Endothelial cell of umbilical vein (primary cell): ENCODE measurements at regions of chr3 and their contacts with region 1.

Region 1: DNA sequence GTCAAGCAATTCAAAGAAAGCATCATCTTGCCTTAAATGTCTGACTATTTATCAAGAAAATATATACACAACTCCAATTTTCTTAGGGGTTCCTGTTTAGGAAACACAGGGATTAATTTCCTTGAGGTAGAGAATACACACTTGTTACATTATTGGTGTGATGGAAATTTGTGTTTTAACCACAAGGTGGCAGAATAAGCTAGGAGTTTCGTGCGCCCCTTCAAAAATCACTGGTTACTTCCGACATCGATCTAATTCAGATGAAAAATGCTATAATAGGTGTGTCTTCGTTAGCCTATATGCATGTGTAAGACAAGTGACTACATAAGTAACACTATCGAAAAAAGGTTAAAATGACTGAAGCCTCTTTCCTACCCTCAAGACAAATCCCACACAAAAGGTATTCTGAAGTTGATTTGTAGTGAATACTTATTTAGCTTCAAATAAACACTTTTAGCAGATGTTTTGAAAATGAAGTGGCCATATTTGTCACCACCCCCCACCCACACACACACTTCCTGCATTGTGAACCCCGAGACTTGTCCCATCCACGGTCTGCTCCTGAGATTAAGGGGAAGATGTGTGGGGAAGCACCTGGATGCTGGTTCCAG is 246.5 kb downstream of the ROBO1 start:
- DNase-seq: peak; percentile 79
- H3K4me3 ChIP-seq: no peak overlapping the region
- H3K27ac ChIP-seq: no peak overlapping the region
- H3K4me1 ChIP-seq: peaks cover 6% of the 10 kb centered on the region
- H3K27me3 ChIP-seq: no peaks in the 10 kb centered on the region
- CTCF ChIP-seq: peak; percentile 17 to 30
- POLR2A ChIP-seq: no peak

Region 2: DNA sequence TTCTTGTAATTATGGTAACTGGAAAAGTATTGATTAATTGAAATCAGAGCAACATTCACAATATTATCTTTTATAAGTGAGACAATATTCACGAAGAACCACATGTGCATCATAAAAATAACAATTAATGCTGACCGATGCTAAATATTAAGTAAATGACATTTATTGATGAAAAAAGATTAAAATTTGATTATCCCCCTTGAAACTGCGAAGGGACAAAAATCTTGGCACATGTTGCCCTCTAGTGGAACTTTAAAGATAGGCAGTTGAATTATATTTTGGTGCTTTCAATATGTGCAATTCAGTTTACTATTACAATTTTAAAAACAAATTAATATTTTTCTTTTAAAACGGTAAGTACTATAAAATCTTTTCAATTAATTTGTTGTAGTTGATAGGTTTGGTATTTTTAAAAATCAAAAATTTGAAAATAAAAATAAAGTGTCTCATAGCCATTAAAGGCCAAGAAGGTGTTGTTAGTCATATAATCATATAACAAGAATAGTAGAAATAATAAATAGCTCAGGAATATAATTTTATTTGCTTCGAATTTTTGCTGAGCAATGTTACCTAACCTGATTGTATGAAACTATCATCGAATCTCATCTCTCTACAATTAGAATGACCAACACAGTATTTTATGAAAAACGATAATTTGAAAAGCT is 23.8 kb before region 1 on chr3:
- CTCF ChIA-PET with region 1: interaction called, 10 read pairs
- POLR2A ChIA-PET with region 1: no interaction called
- dilution Hi-C with region 1: no loop called
- intact Hi-C with region 1: no loop called
- DNase-seq: peak; percentile 33
- H3K4me3 ChIP-seq: no peak overlapping the region
- H3K27ac ChIP-seq: no peak overlapping the region
- H3K4me1 ChIP-seq: no peaks in the 10 kb centered on the region
- H3K27me3 ChIP-seq: no peaks in the 10 kb centered on the region
- CTCF ChIP-seq: peak; percentile 25 to 35
- POLR2A ChIP-seq: no peak

Region 3: DNA sequence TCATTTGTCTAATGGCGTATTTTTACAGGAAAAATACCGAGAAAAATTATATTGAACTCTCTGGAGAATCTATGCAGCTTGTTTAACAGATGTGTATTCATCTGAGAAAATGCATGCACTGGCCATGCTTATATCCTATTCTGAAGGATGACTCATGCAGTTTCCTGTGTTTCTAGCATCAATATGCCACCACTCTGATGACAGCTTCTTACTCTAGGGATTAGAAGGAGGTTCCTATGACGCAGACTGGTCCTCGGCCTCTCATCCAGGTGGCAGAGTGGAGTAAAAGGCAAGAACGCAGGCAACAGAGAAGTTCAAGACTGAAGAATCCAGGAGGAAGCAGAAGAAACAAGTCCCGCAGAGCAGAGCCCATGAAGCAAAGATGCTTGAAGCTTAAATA is 1156.5 kb after region 1 on chr3:
- CTCF ChIA-PET with region 1: interaction called, 90 read pairs
- POLR2A ChIA-PET with region 1: no interaction called
- dilution Hi-C with region 1: no loop called
- intact Hi-C with region 1: loop called (anchors 1 kb)
- DNase-seq: peak; percentile 62
- H3K4me3 ChIP-seq: no peak overlapping the region
- H3K27ac ChIP-seq: no peak overlapping the region
- H3K4me1 ChIP-seq: no peaks in the 10 kb centered on the region
- H3K27me3 ChIP-seq: no peaks in the 10 kb centered on the region
- CTCF ChIP-seq: no peak
- POLR2A ChIP-seq: no peak

Region 4: DNA sequence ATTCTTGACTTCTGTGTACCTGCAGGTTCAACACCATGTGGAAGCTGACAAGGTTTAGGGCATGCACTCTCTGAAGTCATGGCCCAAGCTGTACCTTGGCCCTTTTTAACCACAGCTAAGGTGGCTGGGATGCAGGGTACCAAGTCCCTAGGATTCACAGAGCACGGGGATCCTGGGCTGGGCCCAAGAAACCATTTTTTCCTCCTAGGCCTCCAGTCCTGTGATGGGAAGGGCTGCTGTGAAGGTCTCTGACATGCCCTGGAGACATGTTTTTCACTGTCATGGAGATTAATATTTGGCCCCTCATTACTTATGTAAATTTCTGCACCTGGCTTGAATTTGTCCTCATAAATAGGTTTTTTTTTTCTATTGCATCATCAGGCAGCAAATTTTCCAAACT is 1183.9 kb after region 1 on chr3:
- CTCF ChIA-PET with region 1: interaction called, 3 read pairs
- POLR2A ChIA-PET with region 1: no interaction called
- dilution Hi-C with region 1: loop called (anchors 25 kb)
- intact Hi-C with region 1: no loop called
- DNase-seq: no peak
- H3K4me3 ChIP-seq: no peak overlapping the region
- H3K27ac ChIP-seq: no peak overlapping the region
- H3K4me1 ChIP-seq: no peaks in the 10 kb centered on the region
- H3K27me3 ChIP-seq: no peaks in the 10 kb centered on the region
- CTCF ChIP-seq: no peak
- POLR2A ChIP-seq: no peak

Region 5: DNA sequence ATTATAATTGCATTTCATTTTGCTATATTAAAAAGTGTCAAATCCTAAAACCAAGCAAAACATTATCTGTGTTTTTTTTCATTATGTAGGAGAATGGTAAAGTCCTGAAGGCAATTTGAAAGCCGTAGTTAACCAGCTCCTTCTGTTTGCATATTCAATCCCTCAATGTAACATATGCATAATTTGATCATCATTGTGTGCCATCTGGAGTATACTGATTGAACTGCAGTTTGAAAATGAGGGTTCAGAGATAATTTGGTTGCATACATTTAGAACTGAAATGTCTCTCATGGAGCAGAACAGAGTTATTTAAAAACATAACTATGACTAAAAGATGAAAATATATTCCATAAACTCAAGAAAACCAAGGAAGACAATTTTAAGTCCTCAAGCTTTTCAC is 1721.5 kb after region 1 on chr3:
- CTCF ChIA-PET with region 1: interaction called, 54 read pairs
- POLR2A ChIA-PET with region 1: no interaction called
- dilution Hi-C with region 1: no loop called
- intact Hi-C with region 1: loop called (anchors 1 kb)
- DNase-seq: peak; percentile 64
- H3K4me3 ChIP-seq: no peak overlapping the region
- H3K27ac ChIP-seq: no peak overlapping the region
- H3K4me1 ChIP-seq: no peaks in the 10 kb centered on the region
- H3K27me3 ChIP-seq: no peaks in the 10 kb centered on the region
- CTCF ChIP-seq: peak; percentile 29 to 42
- POLR2A ChIP-seq: no peak